Thyroid gland (tissue), 4 donors: ENCODE measurements at regions of chr1 and their contacts with region 1.

Region 1: DNA sequence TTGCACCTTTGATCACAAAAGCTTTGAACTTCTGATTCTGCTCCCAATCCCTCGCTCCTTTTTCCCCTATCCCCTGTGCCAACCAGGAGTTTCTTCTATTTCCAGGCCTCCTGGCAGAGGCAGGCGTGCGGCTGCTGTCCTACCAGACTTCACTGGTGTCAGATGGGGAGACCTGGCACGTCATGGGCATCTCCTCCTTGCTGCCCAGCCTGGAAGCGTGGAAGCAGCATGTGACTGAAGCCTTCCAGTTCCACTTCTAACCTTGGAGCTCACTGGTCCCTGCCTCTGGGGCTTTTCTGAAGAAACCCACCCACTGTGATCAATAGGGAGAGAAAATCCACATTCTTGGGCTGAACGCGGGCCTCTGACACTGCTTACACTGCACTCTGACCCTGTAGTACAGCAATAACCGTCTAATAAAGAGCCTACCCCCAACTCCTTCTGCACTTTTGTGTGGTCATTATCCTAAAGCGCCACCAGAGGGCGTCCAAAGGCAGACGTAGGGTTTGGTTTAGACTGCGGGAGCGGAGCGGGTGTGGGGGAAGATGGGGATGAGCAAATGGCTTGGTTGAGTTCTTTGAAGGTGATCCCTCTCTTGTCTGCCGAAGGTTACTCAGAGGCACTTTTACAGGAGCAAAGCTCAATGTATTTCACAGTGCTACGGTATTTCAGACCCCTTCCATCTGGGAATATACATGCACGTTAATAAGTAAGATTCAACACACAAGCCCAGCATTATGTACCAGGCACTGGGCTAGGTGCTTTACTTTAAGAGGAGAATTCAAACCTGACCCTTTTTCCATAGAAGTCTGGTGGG is 24.7 kb downstream of the HMGCS2 start:
- DNase-seq: peak; percentile 67 to 76
- H3K4me3 ChIP-seq: no peak overlapping the region
- H3K27ac ChIP-seq: peak overlapping the region in 2 of 3 donors; percentile 18 to 57
- H3K4me1 ChIP-seq: peaks cover 30 to 31% of the 10 kb centered on the region in 2 donors
- H3K27me3 ChIP-seq: no peaks in the 10 kb centered on the region
- CTCF ChIP-seq: peak; percentile 52 to 89 (median 76)
- POLR2A ChIP-seq: no peak

Region 2: DNA sequence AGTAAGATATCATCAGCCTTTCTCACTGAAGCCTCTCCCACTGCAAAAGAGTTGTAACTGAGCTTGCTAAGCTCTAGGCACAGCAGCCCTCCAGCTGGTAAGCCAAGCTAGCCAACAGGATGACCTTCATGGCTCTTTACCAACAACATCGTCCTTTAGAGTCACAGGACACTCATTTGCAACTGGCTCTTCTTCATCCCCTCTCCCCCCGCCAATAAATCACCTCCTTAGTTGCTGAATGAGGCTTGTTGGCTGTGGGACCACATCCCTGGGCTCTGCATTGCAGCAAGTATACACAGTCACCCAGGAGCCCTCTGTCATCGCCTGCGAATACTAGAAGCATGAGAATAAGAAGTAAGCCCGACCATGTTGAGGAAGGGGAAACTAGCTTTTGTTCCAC is 79.9 kb before region 1 on chr1:
- intact Hi-C with region 1: no loop called
- DNase-seq: no peak
- H3K4me3 ChIP-seq: no peak overlapping the region
- H3K27ac ChIP-seq: no peak overlapping the region
- H3K4me1 ChIP-seq: peaks cover 33 to 44% of the 10 kb centered on the region in 2 donors
- H3K27me3 ChIP-seq: no peaks in the 10 kb centered on the region
- CTCF ChIP-seq: no peak
- POLR2A ChIP-seq: no peak

Region 3: GRCh38 chr1:119808972-119809550 is 65.1 kb after region 1 on chr1:
- intact Hi-C with region 1: loop called (anchors 10 kb)
- DNase-seq: peak; percentile 76 to 79
- H3K4me3 ChIP-seq: no peak overlapping the region
- H3K27ac ChIP-seq: no peak overlapping the region
- H3K4me1 ChIP-seq: no peaks in the 10 kb centered on the region
- H3K27me3 ChIP-seq: no peaks in the 10 kb centered on the region
- CTCF ChIP-seq: peak; percentile 58 to 86 (median 64)
- POLR2A ChIP-seq: no peak